MCF 10A (cell line): ENCODE measurements at regions of chr4 and their contacts with region 1.

Region 1: GRCh38 chr4:72701987-72702819 is 133.2 kb upstream of the ADAMTS3 start:
- DNase-seq: peak; percentile 75
- H3K4me3 Mint-ChIP-seq: peak overlapping the region; percentile 78
- H3K27ac Mint-ChIP-seq: peak overlapping the region; percentile 49
- H3K4me1 Mint-ChIP-seq: no peaks in the 10 kb centered on the region
- H3K27me3 Mint-ChIP-seq: no peaks in the 10 kb centered on the region
- CTCF ChIP-seq: peak; percentile 60

Region 2: DNA sequence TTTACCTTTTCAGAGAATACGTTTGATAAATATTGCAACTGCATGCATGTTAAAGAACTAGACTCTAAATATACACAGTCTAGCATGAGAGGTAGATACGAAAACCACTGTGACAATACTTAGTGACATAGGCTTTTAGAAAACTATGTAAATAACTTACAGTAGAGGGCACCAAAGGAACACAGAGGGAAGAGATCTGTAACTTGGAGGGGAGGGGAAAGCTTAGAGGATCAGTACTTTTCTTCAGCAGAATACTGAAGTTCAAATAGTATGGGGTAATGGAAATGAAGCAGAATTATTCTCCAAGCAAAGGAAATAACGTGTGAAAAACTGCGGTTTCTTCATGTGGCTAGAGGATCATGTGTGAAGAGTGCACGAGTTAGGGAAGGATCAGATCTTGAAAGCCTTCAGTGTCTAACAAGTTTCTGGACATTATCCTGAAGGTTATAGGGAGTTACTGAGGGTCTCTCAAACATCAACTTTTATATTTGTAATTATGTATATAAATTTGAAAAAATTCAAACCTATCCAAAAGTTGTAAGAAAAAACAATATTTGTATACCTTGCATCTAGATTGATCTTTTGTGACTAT is 406.1 kb before region 1 on chr4:
- CTCF ChIA-PET with region 1: interaction called, 3 read pairs
- POLR2A ChIA-PET with region 1: no interaction called
- intact Hi-C with region 1: loop called (anchors 5 kb)
- DNase-seq: peak; percentile 58
- H3K4me3 Mint-ChIP-seq: no peak overlapping the region
- H3K27ac Mint-ChIP-seq: no peak overlapping the region
- H3K4me1 Mint-ChIP-seq: no peaks in the 10 kb centered on the region
- H3K27me3 Mint-ChIP-seq: no peaks in the 10 kb centered on the region
- CTCF ChIP-seq: peak; percentile 78

Region 3: DNA sequence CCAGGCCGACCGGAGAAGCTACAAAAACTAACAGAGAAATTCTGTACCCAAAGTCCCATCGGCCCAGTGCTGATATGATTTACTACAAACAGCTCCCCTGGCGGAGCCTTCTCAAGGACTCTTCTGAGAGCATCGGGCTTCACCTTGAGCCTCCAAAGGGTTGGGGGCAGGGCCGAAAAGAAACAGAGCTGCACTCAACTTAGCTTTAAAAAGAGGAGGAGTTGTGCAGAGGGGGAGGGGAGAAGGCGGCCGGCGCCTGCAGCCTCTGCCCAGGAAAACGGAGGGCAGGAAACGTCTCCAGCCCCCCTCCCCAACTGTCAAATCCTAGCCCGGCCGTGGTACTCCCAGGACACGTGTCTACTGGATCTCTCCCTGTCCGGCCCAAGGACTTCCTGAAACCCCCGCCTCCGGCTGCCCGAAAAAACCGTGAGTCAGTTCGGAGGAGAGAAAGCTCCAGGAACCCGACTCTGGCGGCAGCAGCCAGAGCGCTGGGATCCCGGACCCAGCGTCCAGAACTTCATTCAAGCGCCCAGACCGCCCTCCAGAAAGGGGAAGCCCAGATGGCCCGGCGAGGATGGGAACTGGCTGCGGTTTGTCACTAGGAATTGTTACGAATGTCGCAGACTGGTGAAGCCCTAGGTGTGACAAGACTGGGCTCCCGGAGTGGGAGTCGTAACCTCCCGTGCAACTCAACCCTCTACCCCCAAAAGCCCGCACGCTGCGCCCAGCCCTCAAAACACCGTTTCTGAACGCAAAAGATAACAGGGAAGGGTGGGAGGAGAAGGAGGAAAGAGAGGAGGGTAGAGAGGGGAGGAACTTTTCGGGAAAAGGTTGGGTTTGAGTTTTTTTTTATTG is 134.2 kb before region 1 on chr4:
- CTCF ChIA-PET with region 1: no interaction called
- POLR2A ChIA-PET with region 1: no interaction called
- intact Hi-C with region 1: loop called (anchors 5 kb)
- DNase-seq: peak; percentile 89
- H3K4me3 Mint-ChIP-seq: peak overlapping the region; percentile 76
- H3K27ac Mint-ChIP-seq: peak overlapping the region; percentile 23
- H3K4me1 Mint-ChIP-seq: peaks cover 24% of the 10 kb centered on the region
- H3K27me3 Mint-ChIP-seq: no peaks in the 10 kb centered on the region
- CTCF ChIP-seq: peak; percentile 40

Region 4: GRCh38 chr4:72909461-72909860 is 207.3 kb after region 1 on chr4:
- CTCF ChIA-PET with region 1: interaction called, 6 read pairs
- POLR2A ChIA-PET with region 1: no interaction called
- intact Hi-C with region 1: loop called (anchors 1 kb)
- DNase-seq: peak; percentile 39
- H3K4me3 Mint-ChIP-seq: no peak overlapping the region
- H3K27ac Mint-ChIP-seq: no peak overlapping the region
- H3K4me1 Mint-ChIP-seq: no peaks in the 10 kb centered on the region
- H3K27me3 Mint-ChIP-seq: no peaks in the 10 kb centered on the region
- CTCF ChIP-seq: peak; percentile 13

Region 5: GRCh38 chr4:73019462-73020047 is 317.4 kb after region 1 on chr4:
- CTCF ChIA-PET with region 1: interaction called, 12 read pairs
- POLR2A ChIA-PET with region 1: interaction called, 3 read pairs
- intact Hi-C with region 1: loop called (anchors 1 kb)
- DNase-seq: peak; percentile 66
- H3K4me3 Mint-ChIP-seq: no peak overlapping the region
- H3K27ac Mint-ChIP-seq: no peak overlapping the region
- H3K4me1 Mint-ChIP-seq: no peaks in the 10 kb centered on the region
- H3K27me3 Mint-ChIP-seq: peaks cover 9% of the 10 kb centered on the region
- CTCF ChIP-seq: peak; percentile 62